ENCODE measurements at regions of chr9 and their contacts with region 1.

Region 1: GRCh38 chr9:112112941-112113681 is 62.0 kb downstream of the SUSD1 start:
- DNase-seq: peak; percentile 86
- H3K27ac ChIP-seq: no peak overlapping the region; the same call in 1 of the 2 replicates
- CTCF ChIP-seq: no peak; the same call in 1 of the 2 replicates

Region 2: GRCh38 chr9:111965566-111966019 is 147.5 kb before region 1 on chr9:
- CTCF ChIA-PET with region 1: no interaction called
- POLR2A ChIA-PET with region 1: no interaction called
- DNase-seq: peak; percentile 92
- H3K27ac ChIP-seq: peak overlapping the region; percentile 45; the same call in 1 of the 2 replicates
- CTCF ChIP-seq: no peak

Region 3: GRCh38 chr9:112086627-112087026 is 26.5 kb before region 1 on chr9:
- CTCF ChIA-PET with region 1: interaction called, 10 read pairs
- POLR2A ChIA-PET with region 1: no interaction called
- DNase-seq: peak; percentile 43
- H3K27ac ChIP-seq: no peak overlapping the region
- CTCF ChIP-seq: peak; percentile 60

Region 4: GRCh38 chr9:112097712-112098688 is 15.1 kb before region 1 on chr9:
- CTCF ChIA-PET with region 1: interaction called, 10 read pairs
- POLR2A ChIA-PET with region 1: no interaction called
- DNase-seq: peak; percentile 88
- H3K27ac ChIP-seq: no peak overlapping the region
- CTCF ChIP-seq: peak; percentile 99

Region 5: GRCh38 chr9:112166172-112167140 is 53.3 kb after region 1 on chr9:
- CTCF ChIA-PET with region 1: interaction called, 15 read pairs
- POLR2A ChIA-PET with region 1: no interaction called
- DNase-seq: peak; percentile 85
- H3K27ac ChIP-seq: peak overlapping the region; percentile 3; the same call in 1 of the 2 replicates
- CTCF ChIP-seq: peak; percentile 31

Region 6: DNA sequence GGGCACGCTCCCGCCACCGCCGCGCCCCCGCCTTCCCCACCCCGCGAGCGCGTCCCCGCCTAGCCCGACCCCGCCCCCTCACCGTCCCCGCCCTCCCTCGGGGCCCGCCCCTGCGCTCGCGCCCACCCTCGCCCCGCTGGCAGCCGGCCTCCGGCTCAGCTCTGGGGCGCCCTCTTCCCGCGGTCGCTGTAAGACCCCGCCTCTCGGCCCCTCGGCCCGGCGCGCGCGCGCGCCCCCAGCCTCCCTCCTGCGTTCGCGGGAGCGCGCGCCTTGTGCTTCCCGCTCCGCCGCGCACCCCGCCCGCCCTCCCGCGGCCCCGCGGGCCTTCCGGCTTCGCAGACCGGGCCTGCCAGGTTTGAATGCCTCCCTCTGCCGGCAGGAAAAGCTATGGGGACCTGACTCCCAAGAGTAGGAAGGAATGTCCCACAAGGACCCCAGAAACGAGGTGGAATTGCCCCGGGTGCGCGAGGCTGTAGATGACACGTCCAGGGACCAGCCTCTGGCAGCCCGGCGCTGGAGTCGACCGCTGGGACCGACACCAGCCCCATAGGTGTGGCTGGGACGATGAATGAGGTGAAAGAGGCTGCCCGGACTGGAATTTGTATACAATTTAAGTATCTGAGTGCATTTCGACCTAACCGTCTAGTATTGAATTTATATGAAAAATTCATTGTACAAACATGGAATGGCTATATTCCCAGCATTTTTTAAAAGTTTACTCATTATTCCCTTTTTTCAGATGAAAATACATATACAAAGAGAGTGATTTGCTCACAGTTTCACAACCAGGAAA is 220.7 kb after region 1 on chr9:
- CTCF ChIA-PET with region 1: interaction called, 34 read pairs
- POLR2A ChIA-PET with region 1: interaction called, 4 read pairs
- DNase-seq: peak; percentile 99
- H3K27ac ChIP-seq: peak overlapping the region; percentile 99
- CTCF ChIP-seq: peak; percentile 90

Region 7: DNA sequence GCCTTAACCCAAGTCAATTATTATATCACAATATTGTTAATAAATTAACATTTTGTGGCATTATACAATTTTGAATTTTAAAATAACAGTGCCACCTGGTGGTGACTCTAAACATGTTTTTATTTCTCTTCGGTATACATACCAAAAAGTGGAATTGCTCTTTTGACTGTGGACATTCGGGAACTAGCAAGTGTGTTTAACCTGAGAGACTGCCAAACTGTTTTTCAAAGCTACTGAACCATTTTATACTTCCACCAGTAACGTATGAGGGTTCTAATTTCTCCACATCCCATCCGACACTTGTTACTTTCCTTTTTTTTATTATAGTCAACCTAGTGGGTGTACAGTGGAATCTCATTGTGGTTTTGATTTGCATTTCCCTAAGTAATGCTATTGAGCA is 248.5 kb after region 1 on chr9:
- CTCF ChIA-PET with region 1: interaction called, 37 read pairs
- POLR2A ChIA-PET with region 1: no interaction called
- DNase-seq: no peak
- H3K27ac ChIP-seq: no peak overlapping the region
- CTCF ChIP-seq: peak; percentile 74

Measured in RWPE1 (cell line).